ENCODE measurements at regions of chr11 and their contacts with region 1.

Region 1: GRCh38 chr11:95849087-95849825 is 59.0 kb downstream of the CEP57 start:
- DNase-seq: peak; percentile 75 to 81
- H3K4me3 ChIP-seq: no peak overlapping the region
- H3K4me3 Mint-ChIP-seq: no peak overlapping the region
- H3K27ac Mint-ChIP-seq: no peak overlapping the region
- H3K4me1 ChIP-seq: no peaks in the 10 kb centered on the region
- H3K4me1 Mint-ChIP-seq: no peaks in the 10 kb centered on the region
- H3K27me3 ChIP-seq: no peaks in the 10 kb centered on the region
- H3K27me3 Mint-ChIP-seq: no peaks in the 10 kb centered on the region
- CTCF ChIP-seq: peak; percentile 71 to 85

Region 2: DNA sequence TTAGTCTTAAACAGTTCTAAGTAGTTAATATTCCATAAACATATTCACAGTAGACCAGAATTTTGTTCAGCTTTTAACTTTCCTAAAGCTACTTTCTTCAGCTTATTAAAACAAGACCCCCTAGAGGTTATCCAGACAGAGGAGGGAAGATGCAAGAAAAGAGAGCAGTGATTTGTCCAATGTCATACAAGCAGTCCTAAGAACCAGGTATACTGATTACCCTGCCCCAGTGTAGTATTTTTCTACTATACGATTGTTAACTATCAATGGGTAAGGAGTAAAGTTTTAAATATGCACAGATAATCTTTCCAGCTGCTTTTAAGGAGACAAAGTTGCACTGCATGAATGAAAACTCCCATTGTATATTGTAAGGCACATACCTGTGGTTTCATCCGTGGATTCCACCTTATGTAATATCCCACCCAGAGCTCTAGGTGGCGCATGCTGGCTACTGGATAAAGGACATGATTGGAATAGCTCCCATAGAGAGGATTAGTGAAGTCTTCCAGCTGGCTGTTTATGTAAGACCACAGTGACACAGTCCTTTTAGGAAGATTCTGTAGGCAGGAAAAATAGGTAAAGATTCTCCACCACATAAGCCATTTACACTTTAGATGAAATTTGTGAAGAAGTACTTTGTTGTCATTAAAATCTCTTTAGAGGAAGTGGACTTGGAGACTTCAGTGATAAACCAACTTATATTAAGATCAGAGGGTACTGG is 13.3 kb before region 1 on chr11:
- CTCF ChIA-PET with region 1: interaction called, 27 read pairs
- POLR2A ChIA-PET with region 1: no interaction called
- intact Hi-C with region 1: no loop called
- DNase-seq: peak; percentile 84 to 85
- H3K4me3 ChIP-seq: no peak overlapping the region
- H3K4me3 Mint-ChIP-seq: no peak overlapping the region
- H3K27ac Mint-ChIP-seq: no peak overlapping the region
- H3K4me1 ChIP-seq: no peaks in the 10 kb centered on the region; the same call in 1 of the 2 replicates
- H3K4me1 Mint-ChIP-seq: peaks cover 6% of the 10 kb centered on the region
- H3K27me3 ChIP-seq: no peaks in the 10 kb centered on the region
- H3K27me3 Mint-ChIP-seq: no peaks in the 10 kb centered on the region
- CTCF ChIP-seq: peak; percentile 97 to 98

Region 3: DNA sequence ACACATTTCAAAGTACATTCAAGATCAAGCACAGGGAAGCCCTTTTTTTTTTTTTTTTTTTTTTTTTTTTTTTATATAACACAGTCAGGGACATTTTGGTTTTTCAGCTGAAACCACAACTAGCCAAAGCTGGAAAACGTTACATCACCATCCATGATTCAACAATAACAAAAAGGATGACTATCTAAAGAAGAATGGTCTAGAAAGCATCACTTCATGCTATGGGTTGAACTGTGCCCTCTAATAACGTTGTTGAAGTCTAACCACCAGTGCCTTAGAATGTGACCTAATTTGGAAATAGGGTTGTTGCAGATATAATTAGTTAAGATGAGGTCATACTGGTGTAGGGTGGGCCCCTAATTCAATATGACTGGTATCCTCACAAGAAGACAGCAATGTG is 28.0 kb after region 1 on chr11:
- CTCF ChIA-PET with region 1: no interaction called
- POLR2A ChIA-PET with region 1: no interaction called
- intact Hi-C with region 1: no loop called
- DNase-seq: no peak
- H3K4me3 ChIP-seq: no peak overlapping the region
- H3K4me3 Mint-ChIP-seq: no peak overlapping the region
- H3K27ac Mint-ChIP-seq: no peak overlapping the region
- H3K4me1 ChIP-seq: no peaks in the 10 kb centered on the region
- H3K4me1 Mint-ChIP-seq: no peaks in the 10 kb centered on the region
- H3K27me3 ChIP-seq: no peaks in the 10 kb centered on the region
- H3K27me3 Mint-ChIP-seq: no peaks in the 10 kb centered on the region
- CTCF ChIP-seq: no peak

Region 4: DNA sequence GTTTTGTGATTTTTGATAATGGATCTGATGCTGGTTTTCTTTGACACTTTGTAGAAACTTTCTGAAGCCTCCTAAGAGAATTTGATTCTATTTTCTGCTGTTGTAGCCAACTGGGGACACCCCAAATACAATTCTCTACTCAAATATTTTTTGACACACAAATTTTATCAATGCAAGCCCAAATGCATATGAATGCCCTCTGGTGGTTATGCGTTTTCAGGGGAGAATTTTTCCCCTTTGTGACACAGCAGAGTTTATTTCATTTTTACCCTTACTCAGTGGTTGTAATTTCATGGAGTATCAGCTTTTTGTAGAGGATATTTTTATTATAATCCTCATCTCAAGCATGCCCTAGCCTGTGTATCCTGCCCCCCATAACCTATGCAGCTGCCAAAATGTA is 119.3 kb after region 1 on chr11:
- CTCF ChIA-PET with region 1: interaction called, 10 read pairs
- POLR2A ChIA-PET with region 1: no interaction called
- intact Hi-C with region 1: loop called (anchors 1 kb)
- DNase-seq: peak in 1 of 2 experiments; percentile 30
- H3K4me3 ChIP-seq: no peak overlapping the region
- H3K4me3 Mint-ChIP-seq: no peak overlapping the region
- H3K27ac Mint-ChIP-seq: no peak overlapping the region
- H3K4me1 ChIP-seq: no peaks in the 10 kb centered on the region
- H3K4me1 Mint-ChIP-seq: no peaks in the 10 kb centered on the region
- H3K27me3 ChIP-seq: no peaks in the 10 kb centered on the region
- H3K27me3 Mint-ChIP-seq: no peaks in the 10 kb centered on the region
- CTCF ChIP-seq: peak; percentile 58 to 62

Region 5: GRCh38 chr11:96219981-96220623 is 370.8 kb after region 1 on chr11:
- CTCF ChIA-PET with region 1: no interaction called
- POLR2A ChIA-PET with region 1: no interaction called
- intact Hi-C with region 1: loop called (anchors 1 kb)
- DNase-seq: peak; percentile 65 to 67
- H3K4me3 ChIP-seq: no peak overlapping the region
- H3K4me3 Mint-ChIP-seq: peak overlapping the region; percentile 45
- H3K27ac Mint-ChIP-seq: peak overlapping the region; percentile 81
- H3K4me1 ChIP-seq: peaks cover 47% of the 10 kb centered on the region
- H3K4me1 Mint-ChIP-seq: peaks cover 46% of the 10 kb centered on the region
- H3K27me3 ChIP-seq: no peaks in the 10 kb centered on the region
- H3K27me3 Mint-ChIP-seq: no peaks in the 10 kb centered on the region
- CTCF ChIP-seq: no peak

Region 6: DNA sequence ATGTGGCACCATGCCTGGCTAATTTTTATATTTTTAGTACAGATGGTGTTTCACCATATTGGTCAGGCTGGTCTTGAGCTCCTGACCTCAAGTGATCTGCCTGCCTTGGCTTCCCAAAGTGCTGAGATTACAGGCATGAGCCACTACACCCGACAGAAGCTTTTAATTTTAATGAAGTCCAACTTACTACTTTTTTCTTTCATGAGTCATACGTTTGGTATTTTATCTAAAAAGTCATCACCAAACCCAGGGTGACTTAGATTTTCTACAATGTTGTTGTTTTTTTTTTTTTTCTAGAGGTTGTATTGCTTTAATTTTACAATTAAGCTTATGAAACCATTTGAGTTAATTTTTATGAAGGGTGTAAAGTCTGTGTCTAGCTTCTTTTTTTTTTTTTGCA is 575.4 kb after region 1 on chr11:
- CTCF ChIA-PET with region 1: interaction called, 10 read pairs
- POLR2A ChIA-PET with region 1: no interaction called
- intact Hi-C with region 1: loop called (anchors 1 kb)
- DNase-seq: no peak
- H3K4me3 ChIP-seq: no peak overlapping the region
- H3K4me3 Mint-ChIP-seq: no peak overlapping the region
- H3K27ac Mint-ChIP-seq: no peak overlapping the region
- H3K4me1 ChIP-seq: peaks cover 5% of the 10 kb centered on the region; the same call in 1 of the 2 replicates
- H3K4me1 Mint-ChIP-seq: no peaks in the 10 kb centered on the region
- H3K27me3 ChIP-seq: no peaks in the 10 kb centered on the region; the same call in 1 of the 2 replicates
- H3K27me3 Mint-ChIP-seq: peaks cover 19% of the 10 kb centered on the region
- CTCF ChIP-seq: no peak

Measured in Caco-2 (cell line).